MCF 10A (cell line): ENCODE measurements at regions of chr18 and their contacts with region 1.

Region 1: DNA sequence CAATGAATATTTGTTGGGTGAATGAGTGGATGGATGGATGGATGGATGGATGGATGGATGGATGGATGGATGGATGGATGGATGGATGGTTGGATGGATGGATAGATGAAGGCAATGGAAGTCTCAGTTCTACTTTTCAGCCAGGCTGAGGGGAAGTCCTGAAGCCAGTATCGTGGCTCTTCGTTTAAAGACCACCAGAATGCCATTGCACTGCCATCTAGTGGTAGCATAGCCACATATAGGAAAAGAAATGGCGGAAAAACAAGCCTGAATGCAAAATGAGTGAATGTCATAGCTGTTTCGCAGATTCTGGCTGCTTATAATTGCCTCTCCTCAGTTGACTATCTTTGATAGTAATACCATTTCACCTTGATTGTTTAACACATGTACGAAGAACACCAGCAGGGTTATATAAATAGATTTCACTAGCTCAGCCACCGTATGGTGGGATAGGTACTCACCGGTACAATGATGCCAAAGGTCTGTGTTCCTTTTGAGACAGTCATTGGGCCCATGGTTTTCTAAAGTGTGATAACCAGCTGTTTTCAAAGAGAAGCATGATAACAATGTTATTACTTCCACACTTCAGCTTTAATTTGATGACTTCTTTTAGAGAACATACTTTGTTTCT is 62.3 kb upstream of the GREB1L start:
- DNase-seq: peak; percentile 70
- H3K4me3 Mint-ChIP-seq: no peak overlapping the region
- H3K27ac Mint-ChIP-seq: no peak overlapping the region
- H3K4me1 Mint-ChIP-seq: no peaks in the 10 kb centered on the region
- H3K27me3 Mint-ChIP-seq: no peaks in the 10 kb centered on the region
- CTCF ChIP-seq: peak; percentile 61

Region 2: DNA sequence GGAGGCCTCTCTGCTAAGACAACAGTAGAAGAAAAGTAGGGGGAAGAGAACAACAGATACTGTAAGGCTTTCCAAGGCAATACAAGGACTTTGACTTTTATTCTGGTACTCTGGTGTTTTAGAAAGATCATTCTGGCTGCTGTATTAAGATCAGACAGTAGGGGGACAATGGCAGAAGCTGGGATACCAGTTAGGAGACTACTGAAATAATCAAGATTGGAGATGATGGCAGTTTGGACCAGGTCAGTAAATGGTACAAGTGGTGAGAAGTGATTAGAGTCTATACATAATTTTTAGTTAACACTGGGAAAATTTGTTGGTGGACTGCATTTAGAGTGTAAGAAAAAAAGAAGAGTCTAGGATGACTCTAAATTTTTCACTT is 207.8 kb before region 1 on chr18:
- CTCF ChIA-PET with region 1: interaction called, 9 read pairs
- POLR2A ChIA-PET with region 1: no interaction called
- intact Hi-C with region 1: loop called (anchors 1 kb)
- DNase-seq: peak; percentile 47
- H3K4me3 Mint-ChIP-seq: no peak overlapping the region
- H3K27ac Mint-ChIP-seq: no peak overlapping the region
- H3K4me1 Mint-ChIP-seq: no peaks in the 10 kb centered on the region
- H3K27me3 Mint-ChIP-seq: no peaks in the 10 kb centered on the region
- CTCF ChIP-seq: peak; percentile 31

Region 3: DNA sequence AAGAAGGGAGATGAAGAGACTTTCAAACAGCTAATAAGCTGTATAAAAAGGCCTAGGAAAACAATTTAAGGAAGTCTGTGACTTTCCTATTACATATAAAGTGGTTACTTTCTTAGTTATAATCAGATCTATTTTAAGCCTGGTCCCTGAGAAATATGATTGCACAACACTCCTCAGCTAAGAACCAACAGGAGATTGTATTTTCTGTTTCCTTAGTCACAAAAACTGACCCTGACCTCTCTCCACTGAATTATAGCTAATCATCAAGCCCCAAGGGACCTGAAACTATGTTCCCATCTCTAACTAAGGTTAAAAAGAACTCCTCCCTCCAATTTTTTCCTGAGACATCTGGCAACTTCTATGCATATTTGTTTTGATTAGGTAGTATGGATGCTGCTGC is 175.0 kb before region 1 on chr18:
- CTCF ChIA-PET with region 1: interaction called, 4 read pairs
- POLR2A ChIA-PET with region 1: interaction called, 4 read pairs
- intact Hi-C with region 1: loop called (anchors 10 kb)
- DNase-seq: peak; percentile 66
- H3K4me3 Mint-ChIP-seq: no peak overlapping the region
- H3K27ac Mint-ChIP-seq: no peak overlapping the region
- H3K4me1 Mint-ChIP-seq: peaks cover 13% of the 10 kb centered on the region
- H3K27me3 Mint-ChIP-seq: no peaks in the 10 kb centered on the region
- CTCF ChIP-seq: no peak

Region 4: GRCh38 chr18:21163647-21164547 is 15.8 kb before region 1 on chr18:
- CTCF ChIA-PET with region 1: interaction called, 15 read pairs
- POLR2A ChIA-PET with region 1: interaction called, 9 read pairs
- intact Hi-C with region 1: no loop called
- DNase-seq: peak; percentile 85
- H3K4me3 Mint-ChIP-seq: peak overlapping the region; percentile 28
- H3K27ac Mint-ChIP-seq: peak overlapping the region; percentile 59
- H3K4me1 Mint-ChIP-seq: peaks cover 15% of the 10 kb centered on the region
- H3K27me3 Mint-ChIP-seq: no peaks in the 10 kb centered on the region
- CTCF ChIP-seq: no peak

Region 5: GRCh38 chr18:21704603-21705364 is 525.1 kb after region 1 on chr18 and contains the start of gene ABHD3:
- CTCF ChIA-PET with region 1: no interaction called
- POLR2A ChIA-PET with region 1: no interaction called
- intact Hi-C with region 1: no loop called
- DNase-seq: peak; percentile 92
- H3K4me3 Mint-ChIP-seq: peak within 1 kb of the TSS; percentile 80
- H3K27ac Mint-ChIP-seq: peak within 1 kb of the TSS; percentile 67
- H3K4me1 Mint-ChIP-seq: peaks cover 4% of the 10 kb centered on the region
- H3K27me3 Mint-ChIP-seq: no peaks in the 10 kb centered on the region
- CTCF ChIP-seq: peak; percentile 42
- total RNA-seq, gene ABHD3: 2.9 and 5.5 TPM in 2 replicates